ENCODE measurements at regions of chr3 and their contacts with region 1.

Region 1: DNA sequence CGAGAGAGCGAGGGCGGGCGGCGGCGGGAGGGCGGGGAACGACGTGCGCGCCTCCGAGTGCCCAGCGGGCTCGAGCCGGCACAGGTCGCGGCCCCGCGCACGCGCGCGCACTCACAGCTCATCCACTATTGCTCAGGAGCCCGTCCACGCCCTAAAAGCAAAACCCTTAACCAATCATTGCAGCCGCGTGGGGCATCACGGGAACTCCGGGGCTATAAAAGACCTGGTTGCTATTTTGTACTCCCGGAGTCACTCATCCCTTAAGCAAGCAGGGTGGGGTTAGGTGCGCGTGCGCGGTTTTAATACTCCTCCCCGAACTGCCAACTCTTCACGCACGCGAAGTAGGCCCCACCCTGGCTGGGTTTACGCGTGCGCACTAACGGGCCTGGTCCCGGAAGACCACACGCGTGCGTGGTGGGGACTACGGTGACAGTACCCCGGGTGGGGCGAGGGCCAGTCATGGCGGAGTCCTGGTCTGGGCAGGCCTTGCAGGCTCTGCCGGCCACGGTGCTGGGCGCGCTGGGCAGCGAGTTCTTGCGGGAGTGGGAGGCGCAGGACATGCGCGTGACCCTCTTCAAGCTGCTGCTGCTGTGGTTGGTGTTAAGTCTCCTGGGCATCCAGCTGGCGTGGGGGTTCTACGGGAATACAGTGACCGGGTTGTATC is at the starts of genes RHOA and TCTA:
- DNase-seq: peak; percentile 97 to 100 (median 100)
- H3K4me3 ChIP-seq: peak within 1 kb of the TSS; percentile 78 to 89
- H3K4me3 Mint-ChIP-seq: peak within 1 kb of the TSS; percentile 91 to 98 (median 94)
- H3K27ac ChIP-seq: peak within 1 kb of the TSS; percentile 93
- H3K27ac Mint-ChIP-seq: peak within 1 kb of the TSS; percentile 95 to 99 (median 97)
- H3K4me1 ChIP-seq: peaks cover 81% of the 10 kb centered on the region
- H3K4me1 Mint-ChIP-seq: peaks cover 51 to 82% (median 63%) of the 10 kb centered on the region in 4 donors
- H3K27me3 ChIP-seq: no peaks in the 10 kb centered on the region
- H3K27me3 Mint-ChIP-seq: no peaks in the 10 kb centered on the region
- total RNA-seq, gene RHOA: 246 to 269 TPM
- total RNA-seq, gene TCTA: 38.0 to 39.0 TPM

Region 2: DNA sequence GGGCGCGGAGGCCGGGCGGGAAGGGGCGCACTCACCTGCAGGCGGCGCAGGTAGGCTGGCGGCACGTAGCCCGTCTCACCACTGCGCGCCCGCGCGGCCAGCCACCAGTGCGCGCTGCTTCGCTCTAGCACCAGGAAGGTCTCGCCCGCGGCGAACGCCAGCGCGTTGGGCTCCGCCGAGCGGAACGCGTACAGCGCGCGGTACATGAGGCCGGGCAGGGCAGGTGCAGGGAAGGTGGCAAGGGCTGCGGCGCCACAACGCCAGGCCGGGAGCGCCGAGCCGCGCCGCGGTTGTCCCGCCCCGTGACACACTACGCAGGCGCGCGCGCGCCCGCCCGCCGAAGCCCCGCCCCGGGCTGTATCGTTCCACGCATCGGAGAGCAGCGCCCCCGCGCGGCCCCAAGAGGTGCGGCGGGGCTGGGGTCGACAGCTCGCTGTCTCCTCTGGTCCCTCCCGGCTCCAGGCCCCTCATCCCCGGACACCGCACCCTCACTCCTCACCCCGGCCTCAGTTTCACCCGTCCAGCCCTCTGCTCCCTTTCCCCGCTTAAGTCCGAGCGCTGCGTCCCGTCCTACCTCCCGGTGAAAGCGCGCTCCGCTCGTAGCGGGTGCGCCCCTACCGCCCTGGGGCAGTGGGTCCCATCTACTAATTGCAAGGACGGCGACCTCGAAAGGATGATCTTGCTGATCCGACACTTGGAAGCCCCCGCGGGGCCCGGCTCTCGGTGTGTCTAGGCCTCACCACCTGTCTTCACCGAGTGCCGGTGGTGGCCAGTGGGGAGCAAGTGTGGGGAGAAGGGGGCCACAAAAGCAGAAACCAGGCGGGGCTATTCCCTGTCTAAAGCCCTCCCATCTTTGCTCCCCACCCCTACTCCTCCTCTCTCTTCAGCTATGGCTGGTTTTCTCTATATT is 726.2 kb before region 1 on chr3 and contains the start of gene NCKIPSD:
- CTCF ChIA-PET with region 1: no interaction called
- POLR2A ChIA-PET with region 1: no interaction called
- intact Hi-C with region 1: loop called (anchors 5 kb)
- DNase-seq: peak; percentile 87 to 94 (median 90)
- H3K4me3 ChIP-seq: peak within 1 kb of the TSS; percentile 59 to 82
- H3K4me3 Mint-ChIP-seq: peak within 1 kb of the TSS; percentile 87 to 99 (median 94)
- H3K27ac ChIP-seq: peak within 1 kb of the TSS; percentile 77
- H3K27ac Mint-ChIP-seq: peak within 1 kb of the TSS; percentile 81 to 94 (median 92)
- H3K4me1 ChIP-seq: peaks cover 34% of the 10 kb centered on the region
- H3K4me1 Mint-ChIP-seq: peaks cover 17 to 49% (median 27%) of the 10 kb centered on the region in 4 donors
- H3K27me3 ChIP-seq: no peaks in the 10 kb centered on the region
- H3K27me3 Mint-ChIP-seq: no peaks in the 10 kb centered on the region
- total RNA-seq, gene NCKIPSD: 20.1 to 21.7 TPM

Region 3: GRCh38 chr3:49399461-49399860 is 12.6 kb before region 1 on chr3:
- CTCF ChIA-PET with region 1: no interaction called
- POLR2A ChIA-PET with region 1: interaction called, 15 read pairs
- intact Hi-C with region 1: no loop called
- DNase-seq: no peak
- H3K4me3 ChIP-seq: no peak overlapping the region
- H3K4me3 Mint-ChIP-seq: peak overlapping the region in 5 of 8 donors; percentile 20 to 54 (median 32)
- H3K27ac ChIP-seq: no peak overlapping the region
- H3K27ac Mint-ChIP-seq: peak overlapping the region in 4 of 7 donors; percentile 27 to 58 (median 38)
- H3K4me1 ChIP-seq: peaks cover 73% of the 10 kb centered on the region
- H3K4me1 Mint-ChIP-seq: peaks cover 39 to 76% (median 53%) of the 10 kb centered on the region in 4 donors
- H3K27me3 ChIP-seq: no peaks in the 10 kb centered on the region
- H3K27me3 Mint-ChIP-seq: no peaks in the 10 kb centered on the region

Region 4: DNA sequence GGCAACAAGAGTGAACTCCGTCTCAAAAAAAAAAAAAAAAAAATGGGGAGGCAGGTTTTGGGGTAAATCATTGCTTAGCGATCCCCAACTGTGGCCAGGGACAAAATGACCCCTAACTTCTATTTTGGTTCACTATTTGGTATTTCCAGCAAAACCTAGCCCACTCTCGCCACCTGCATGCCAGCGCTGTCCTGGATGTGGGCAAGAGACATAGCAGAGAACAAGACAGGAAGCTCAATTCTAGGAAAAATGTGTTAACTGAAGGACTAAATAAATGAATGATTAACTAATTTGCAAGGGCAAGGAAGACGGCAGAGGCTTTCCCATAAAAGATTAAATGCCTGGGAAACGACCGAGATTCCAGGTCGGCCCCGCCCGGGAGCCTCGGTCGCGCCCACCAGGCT is 16.6 kb after region 1 on chr3:
- CTCF ChIA-PET with region 1: interaction called, 16 read pairs
- POLR2A ChIA-PET with region 1: interaction called, 41 read pairs
- intact Hi-C with region 1: loop called (anchors 1 kb)
- DNase-seq: no peak
- H3K4me3 ChIP-seq: peak overlapping the region; percentile 55 to 86
- H3K4me3 Mint-ChIP-seq: peak overlapping the region; percentile 90 to 97 (median 95)
- H3K27ac ChIP-seq: peak overlapping the region; percentile 63
- H3K27ac Mint-ChIP-seq: peak overlapping the region; percentile 85 to 97 (median 94)
- H3K4me1 ChIP-seq: peaks cover 22% of the 10 kb centered on the region
- H3K4me1 Mint-ChIP-seq: peaks cover 8 to 33% (median 22%) of the 10 kb centered on the region in 4 donors
- H3K27me3 ChIP-seq: no peaks in the 10 kb centered on the region
- H3K27me3 Mint-ChIP-seq: no peaks in the 10 kb centered on the region

Region 5: DNA sequence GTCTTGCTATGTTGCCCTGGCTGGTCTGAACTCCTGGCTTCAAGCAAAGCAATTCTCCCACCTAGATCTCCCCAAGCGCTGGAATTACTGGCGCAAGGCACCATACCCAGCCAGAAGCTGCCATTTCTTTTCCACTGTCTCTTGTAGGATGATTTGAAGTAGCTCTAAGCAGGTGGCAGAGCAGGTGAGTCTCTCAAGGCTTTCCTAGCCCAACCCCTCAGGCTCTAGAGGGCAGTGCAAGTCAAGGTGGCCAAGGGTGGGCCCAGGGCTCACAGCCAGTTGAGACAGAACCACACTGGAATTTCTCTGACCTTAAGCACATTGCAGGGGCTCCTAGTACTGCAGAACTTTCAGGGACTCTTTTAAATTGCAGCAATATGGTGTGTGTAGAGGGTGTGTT is 42.4 kb after region 1 on chr3:
- CTCF ChIA-PET with region 1: interaction called, 46 read pairs
- POLR2A ChIA-PET with region 1: interaction called, 23 read pairs
- intact Hi-C with region 1: loop called (anchors 1 kb)
- DNase-seq: no peak
- H3K4me3 ChIP-seq: no peak overlapping the region
- H3K4me3 Mint-ChIP-seq: no peak overlapping the region
- H3K27ac ChIP-seq: no peak overlapping the region
- H3K27ac Mint-ChIP-seq: peak overlapping the region in 2 of 7 donors; percentile 19 to 60
- H3K4me1 ChIP-seq: no peaks in the 10 kb centered on the region
- H3K4me1 Mint-ChIP-seq: no peaks in the 10 kb centered on the region
- H3K27me3 ChIP-seq: no peaks in the 10 kb centered on the region
- H3K27me3 Mint-ChIP-seq: peaks cover 0 to 3% of the 10 kb centered on the region in 2 donors

Region 6: GRCh38 chr3:49673715-49674496 is 261.8 kb after region 1 on chr3 and contains the start of gene APEH:
- CTCF ChIA-PET with region 1: interaction called, 4 read pairs
- POLR2A ChIA-PET with region 1: no interaction called
- intact Hi-C with region 1: loop called (anchors 10 kb)
- DNase-seq: peak; percentile 98 to 99 (median 98)
- H3K4me3 ChIP-seq: peak within 1 kb of the TSS; percentile 48 to 75
- H3K4me3 Mint-ChIP-seq: peak within 1 kb of the TSS; percentile 90 to 99 (median 94)
- H3K27ac ChIP-seq: peak within 1 kb of the TSS; percentile 77
- H3K27ac Mint-ChIP-seq: peak within 1 kb of the TSS; percentile 97 to 99 (median 98)
- H3K4me1 ChIP-seq: peaks cover 32% of the 10 kb centered on the region
- H3K4me1 Mint-ChIP-seq: peaks cover 20 to 50% (median 34%) of the 10 kb centered on the region in 4 donors
- H3K27me3 ChIP-seq: no peaks in the 10 kb centered on the region
- H3K27me3 Mint-ChIP-seq: no peaks in the 10 kb centered on the region
- total RNA-seq, gene APEH: 130 to 136 TPM